ENCODE measurements at regions of chr4 and their contacts with region 1.

Region 1: GRCh38 chr4:127870688-127871087 is 10.0 kb upstream of the PLK4 start:
- DNase-seq: peak in 1 of 2 experiments; percentile 19
- H3K4me3 ChIP-seq: no peak overlapping the region
- H3K27ac ChIP-seq: no peak overlapping the region
- H3K4me1 ChIP-seq: no peaks in the 10 kb centered on the region
- H3K27me3 ChIP-seq: no peaks in the 10 kb centered on the region
- CTCF ChIP-seq: no peak

Region 2: GRCh38 chr4:127798446-127798845 is 72.2 kb before region 1 on chr4:
- CTCF ChIA-PET with region 1: no interaction called
- POLR2A ChIA-PET with region 1: interaction called, 13 read pairs
- intact Hi-C with region 1: no loop called
- DNase-seq: no peak
- H3K4me3 ChIP-seq: no peak overlapping the region
- H3K27ac ChIP-seq: peak overlapping the region; percentile 17; the same call in 1 of the 2 replicates
- H3K4me1 ChIP-seq: no peaks in the 10 kb centered on the region
- H3K27me3 ChIP-seq: no peaks in the 10 kb centered on the region
- CTCF ChIP-seq: no peak

Region 3: DNA sequence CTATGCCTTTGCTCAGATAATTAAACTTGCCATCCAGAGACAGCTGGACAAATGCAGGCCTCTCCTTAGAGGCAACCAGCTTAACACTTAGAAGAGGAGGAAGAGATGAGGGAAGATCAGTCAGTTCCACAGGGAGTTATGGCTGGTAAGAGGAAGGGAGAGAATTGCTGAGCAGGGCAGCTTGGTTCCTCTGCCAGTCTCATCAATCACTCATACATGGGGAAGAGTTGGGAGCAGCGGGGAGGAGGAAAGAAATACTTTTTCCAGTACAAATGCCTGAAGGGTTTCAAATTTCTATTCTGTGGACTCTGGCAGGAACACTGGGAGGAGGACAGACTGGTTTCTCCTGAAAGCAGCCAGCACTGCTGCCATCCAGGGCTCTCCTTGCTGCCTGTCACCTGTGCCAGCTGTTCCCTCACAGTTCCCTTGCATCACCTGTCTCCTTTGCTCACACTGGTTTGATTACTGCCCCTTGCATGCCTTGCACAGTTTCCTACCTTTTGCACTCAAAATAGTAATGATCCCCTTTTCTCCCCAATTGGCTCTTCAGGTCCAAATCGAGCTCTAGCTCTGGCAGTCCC is 357.4 kb after region 1 on chr4:
- CTCF ChIA-PET with region 1: no interaction called
- POLR2A ChIA-PET with region 1: no interaction called
- intact Hi-C with region 1: no loop called
- DNase-seq: peak; percentile 73 to 76
- H3K4me3 ChIP-seq: no peak overlapping the region
- H3K27ac ChIP-seq: peak overlapping the region; percentile 51
- H3K4me1 ChIP-seq: peaks cover 17% of the 10 kb centered on the region
- H3K27me3 ChIP-seq: no peaks in the 10 kb centered on the region
- CTCF ChIP-seq: no peak

Region 4: GRCh38 chr4:128338634-128339355 is 468.1 kb after region 1 on chr4:
- CTCF ChIA-PET with region 1: no interaction called
- POLR2A ChIA-PET with region 1: no interaction called
- intact Hi-C with region 1: no loop called
- DNase-seq: peak; percentile 50 to 86
- H3K4me3 ChIP-seq: no peak overlapping the region
- H3K27ac ChIP-seq: peak overlapping the region; percentile 57
- H3K4me1 ChIP-seq: peaks cover 25% of the 10 kb centered on the region
- H3K27me3 ChIP-seq: no peaks in the 10 kb centered on the region
- CTCF ChIP-seq: no peak